Activated CD4-positive, alpha-beta memory T cell treated with anti-CD3 and anti-CD28 coated beads for 36 hours (primary cell): ENCODE measurements at regions of chr5 and their contacts with region 1.

Region 1: DNA sequence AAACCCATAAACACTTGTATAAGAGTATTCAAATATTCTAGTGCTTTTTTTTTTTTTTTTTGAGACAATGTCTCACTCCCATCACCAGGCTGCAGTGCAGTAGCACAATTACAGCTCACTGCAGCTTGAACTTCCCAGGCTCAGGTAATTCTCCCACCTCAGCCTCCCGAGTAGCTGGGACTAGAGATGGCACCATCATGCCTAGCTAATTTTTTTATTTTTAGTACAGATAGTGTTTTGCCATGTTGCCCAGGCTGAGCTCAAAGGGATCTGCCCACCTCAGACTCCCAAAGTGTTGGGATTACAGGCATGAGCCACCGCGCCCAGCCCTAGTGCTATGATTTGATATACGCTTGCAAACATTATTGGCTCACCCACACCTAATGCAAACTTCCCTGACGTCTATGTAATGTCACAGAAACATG is 11.8 kb downstream of the IL6ST start:
- DNase-seq: no peak
- H3K4me3 Mint-ChIP-seq: peak overlapping the region; percentile 20
- H3K27ac Mint-ChIP-seq: peak overlapping the region; percentile 64
- H3K4me1 Mint-ChIP-seq: peaks cover 80% of the 10 kb centered on the region
- H3K27me3 Mint-ChIP-seq: no peaks in the 10 kb centered on the region

Region 2: DNA sequence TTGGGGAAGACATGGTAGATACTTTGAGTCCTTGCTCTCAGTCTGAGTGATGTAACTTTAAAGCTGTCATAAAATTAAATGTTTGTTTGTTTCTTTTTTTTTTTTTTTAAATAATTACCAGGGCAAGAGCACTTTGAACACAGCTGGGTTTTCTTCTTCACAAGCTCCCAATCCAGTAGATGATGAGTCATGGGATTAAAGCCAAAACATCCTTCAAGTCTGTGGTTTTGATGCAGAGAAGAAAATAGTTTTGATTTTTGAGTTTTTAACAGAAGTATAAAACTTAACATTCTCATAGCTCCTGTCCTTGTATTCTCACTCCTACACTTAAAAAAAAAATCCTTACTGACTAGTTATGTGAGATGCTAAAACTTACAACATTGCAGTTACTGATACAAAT is 166.6 kb before region 1 on chr5:
- CTCF ChIA-PET with region 1: no interaction called
- POLR2A ChIA-PET with region 1: no interaction called
- intact Hi-C with region 1: no loop called
- DNase-seq: no peak
- H3K4me3 Mint-ChIP-seq: no peak overlapping the region
- H3K27ac Mint-ChIP-seq: no peak overlapping the region
- H3K4me1 Mint-ChIP-seq: peaks cover 2% of the 10 kb centered on the region
- H3K27me3 Mint-ChIP-seq: peaks cover 13% of the 10 kb centered on the region

Region 3: GRCh38 chr5:56200856-56201666 is 218.1 kb after region 1 on chr5:
- CTCF ChIA-PET with region 1: interaction called, 15 read pairs
- POLR2A ChIA-PET with region 1: no interaction called
- intact Hi-C with region 1: loop called (anchors 1 kb)
- DNase-seq: peak; percentile 72
- H3K4me3 Mint-ChIP-seq: no peak overlapping the region
- H3K27ac Mint-ChIP-seq: no peak overlapping the region
- H3K4me1 Mint-ChIP-seq: peaks cover 18% of the 10 kb centered on the region
- H3K27me3 Mint-ChIP-seq: no peaks in the 10 kb centered on the region